ENCODE measurements at regions of chr6 and their contacts with region 1.

Region 1: DNA sequence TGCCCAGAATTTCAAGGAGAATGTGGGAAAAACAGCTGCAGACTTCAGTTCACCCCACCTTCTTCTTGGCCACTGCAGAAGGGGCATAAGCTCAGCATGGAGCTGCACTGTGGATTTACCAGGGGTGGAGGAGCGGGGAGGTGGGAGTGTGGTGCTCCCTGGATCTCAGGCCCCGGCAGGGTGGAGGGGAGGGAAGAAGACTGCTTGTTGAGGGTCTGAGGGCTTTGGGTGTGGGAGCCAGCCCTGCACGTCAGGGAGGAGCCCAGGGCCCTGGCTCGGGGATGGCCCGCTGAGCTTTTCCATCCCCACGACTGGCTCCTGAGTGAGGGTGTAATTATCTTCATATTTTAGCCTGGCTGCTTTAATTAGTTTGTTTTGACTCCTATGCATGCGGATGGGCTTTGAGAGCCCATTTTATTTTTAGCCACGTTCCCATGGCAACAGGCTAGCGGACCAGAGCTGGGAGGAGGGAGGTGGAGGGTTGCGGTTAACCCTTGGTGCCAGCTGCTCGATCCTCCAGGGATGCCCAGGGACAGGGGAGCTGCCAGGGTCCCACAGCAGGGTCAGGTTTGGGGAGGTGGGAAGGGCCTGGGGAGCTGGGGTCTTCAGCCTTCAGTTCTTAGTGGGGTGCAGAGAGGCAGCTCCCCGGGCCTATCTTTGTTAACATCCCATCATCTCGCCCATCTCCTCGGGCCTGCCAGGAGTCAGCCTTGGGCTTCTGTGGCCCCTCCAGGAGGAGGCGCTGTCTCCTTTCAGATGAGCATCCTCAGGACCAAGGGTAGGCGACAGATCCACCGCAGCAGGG is 68.2 kb downstream of the RAB44 start:
- DNase-seq: peak; percentile 89
- ATAC-seq: peak; percentile 76

Region 2: DNA sequence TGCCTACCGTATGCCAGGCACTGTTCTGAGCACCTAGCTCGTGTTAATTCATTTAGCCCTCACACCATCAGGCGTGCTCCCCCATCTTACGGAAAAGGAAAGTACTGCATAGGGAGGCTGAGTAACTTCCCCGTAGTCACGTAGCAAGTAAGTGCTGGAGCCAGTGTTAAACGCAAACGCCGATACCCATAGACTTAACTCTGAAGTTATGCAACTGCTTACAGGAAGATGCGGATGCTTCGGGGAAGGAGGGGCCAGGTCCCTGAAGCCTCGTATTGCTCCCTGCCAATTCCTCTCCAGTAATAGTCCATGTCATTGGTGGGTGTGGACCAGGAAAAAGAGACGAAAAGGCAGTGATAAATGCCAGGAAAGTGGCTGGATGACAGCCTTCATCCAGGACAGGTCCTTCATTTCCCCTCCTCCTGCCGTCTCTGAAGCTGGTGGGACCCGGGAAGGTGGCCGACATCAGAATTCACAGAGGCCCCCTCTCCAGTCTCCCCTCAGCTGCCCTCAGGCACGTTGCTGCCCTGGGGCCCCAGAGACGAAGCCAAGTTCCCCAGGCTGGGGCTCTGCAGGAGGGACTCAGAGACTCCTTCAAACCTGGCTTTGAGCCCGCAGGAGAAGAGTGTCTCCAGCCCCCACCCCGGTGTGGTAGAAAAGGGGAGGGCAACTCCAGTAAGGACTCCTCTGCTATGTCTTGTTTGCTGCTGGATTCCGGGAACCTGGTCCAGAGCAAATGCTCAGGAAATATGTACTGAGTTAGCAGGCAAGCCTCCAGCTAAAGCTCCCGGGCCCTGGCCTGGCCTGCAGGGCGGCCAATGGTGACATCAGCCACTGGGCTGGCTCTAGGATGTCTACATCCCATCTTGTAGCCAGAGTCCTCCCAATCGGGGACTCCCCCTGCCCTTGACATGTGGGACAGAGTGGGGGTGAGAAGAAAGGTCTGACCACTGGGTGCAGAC is 30.4 kb before region 1 on chr6:
- intact Hi-C with region 1: no loop called
- DNase-seq: peak; percentile 92
- ATAC-seq: peak; percentile 86

Region 3: GRCh38 chr6:36851149-36851614 is 85.4 kb after region 1 on chr6:
- intact Hi-C with region 1: loop called (anchors 5 kb)
- DNase-seq: no peak
- ATAC-seq: peak; percentile 28

Region 4: DNA sequence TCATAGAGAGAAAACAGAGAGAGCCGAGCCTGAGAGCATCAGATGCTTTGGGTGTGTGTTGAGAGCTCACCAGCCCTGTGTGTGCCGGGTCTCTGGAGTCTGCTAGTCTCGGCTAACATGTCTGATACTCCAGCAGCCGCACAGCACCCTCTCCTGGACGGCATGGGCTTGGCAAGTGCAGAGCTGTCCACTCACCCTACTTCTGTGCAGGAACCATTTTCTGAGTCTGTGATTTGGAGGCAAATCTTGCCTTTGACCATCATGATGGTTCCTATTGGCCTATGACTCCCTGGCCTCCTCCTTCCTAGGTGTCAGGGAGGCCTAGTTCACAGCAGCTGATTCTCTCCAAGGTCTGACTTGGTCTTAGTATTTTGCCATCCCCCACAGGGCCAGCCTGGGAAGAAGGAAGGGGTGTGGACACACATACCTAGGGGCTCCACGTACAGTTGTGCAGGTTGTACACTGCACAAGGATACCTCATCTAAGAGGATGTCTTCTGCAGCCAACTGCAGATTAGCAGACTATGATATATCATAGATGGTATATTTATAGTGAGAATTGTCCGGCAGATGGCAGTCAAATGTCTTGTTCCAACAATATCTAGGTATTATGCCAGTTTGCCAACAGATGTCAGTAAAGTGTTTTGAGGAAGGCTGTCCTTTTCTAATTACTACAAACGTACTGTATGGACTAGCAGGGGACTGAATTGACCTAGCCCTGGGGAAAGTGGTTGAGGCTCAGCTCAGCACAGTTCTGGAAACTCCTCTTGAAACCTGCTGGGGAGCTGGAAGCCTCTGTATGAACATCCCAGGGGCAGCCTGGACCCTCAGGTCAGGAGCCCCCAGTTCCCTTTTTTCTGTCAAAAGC is 252.6 kb after region 1 on chr6:
- intact Hi-C with region 1: loop called (anchors 5 kb)
- DNase-seq: peak; percentile 94
- ATAC-seq: peak; percentile 97

Region 5: GRCh38 chr6:37207903-37208456 is 442.2 kb after region 1 on chr6:
- intact Hi-C with region 1: loop called (anchors 10 kb)
- DNase-seq: peak; percentile 91
- ATAC-seq: peak; percentile 77